MCF 10A (cell line): ENCODE measurements at regions of chr12 and their contacts with region 1.

Region 1: DNA sequence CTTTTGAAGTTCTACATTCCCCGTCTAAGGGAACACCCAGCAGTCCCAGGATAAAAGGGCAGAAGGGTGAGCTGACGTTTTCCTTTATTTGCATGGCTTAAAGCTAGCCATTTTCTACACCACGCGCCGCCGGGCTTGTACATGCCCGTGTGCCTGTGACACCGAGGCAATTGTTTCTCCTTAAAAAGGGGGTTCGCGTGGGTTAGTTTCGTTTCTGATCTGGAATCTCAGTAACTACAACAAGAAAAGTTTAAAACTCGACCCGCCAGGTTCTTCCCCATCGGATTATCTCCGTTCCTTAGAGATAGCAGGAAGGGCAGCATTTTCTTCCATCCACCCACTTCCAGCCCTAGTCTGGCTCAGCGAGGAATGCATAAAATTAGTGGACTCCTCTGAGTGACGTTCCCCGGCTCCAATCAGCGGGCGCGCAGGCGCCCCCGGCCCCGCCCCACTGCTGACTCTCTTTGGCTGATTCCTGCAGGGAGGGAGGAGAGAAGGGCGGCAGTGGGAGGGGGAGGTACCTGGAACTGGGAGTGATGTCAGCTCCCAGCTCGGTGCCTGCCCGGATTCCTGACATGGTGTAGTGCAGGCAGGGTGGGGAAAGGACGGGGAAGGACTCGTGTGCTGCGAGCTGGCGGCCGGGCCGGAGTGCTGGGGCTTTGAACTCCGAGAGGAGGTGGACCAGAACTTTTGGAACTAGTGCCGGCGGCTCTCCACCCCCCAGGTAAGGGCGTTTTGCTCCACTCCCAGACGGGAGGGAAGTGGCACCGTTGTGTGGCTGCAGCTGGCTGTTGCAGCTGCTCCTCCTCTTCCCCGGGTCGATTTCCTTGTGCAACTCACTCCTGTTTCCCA is at the start of gene PPFIBP1:
- DNase-seq: peak; percentile 99
- H3K4me3 Mint-ChIP-seq: peak within 1 kb of the TSS; percentile 85
- H3K27ac Mint-ChIP-seq: peak within 1 kb of the TSS; percentile 90
- H3K4me1 Mint-ChIP-seq: peaks cover 23% of the 10 kb centered on the region
- H3K27me3 Mint-ChIP-seq: no peaks in the 10 kb centered on the region
- CTCF ChIP-seq: no peak
- total RNA-seq, gene PPFIBP1: 82.6 and 87.7 TPM in 2 replicates

Region 2: DNA sequence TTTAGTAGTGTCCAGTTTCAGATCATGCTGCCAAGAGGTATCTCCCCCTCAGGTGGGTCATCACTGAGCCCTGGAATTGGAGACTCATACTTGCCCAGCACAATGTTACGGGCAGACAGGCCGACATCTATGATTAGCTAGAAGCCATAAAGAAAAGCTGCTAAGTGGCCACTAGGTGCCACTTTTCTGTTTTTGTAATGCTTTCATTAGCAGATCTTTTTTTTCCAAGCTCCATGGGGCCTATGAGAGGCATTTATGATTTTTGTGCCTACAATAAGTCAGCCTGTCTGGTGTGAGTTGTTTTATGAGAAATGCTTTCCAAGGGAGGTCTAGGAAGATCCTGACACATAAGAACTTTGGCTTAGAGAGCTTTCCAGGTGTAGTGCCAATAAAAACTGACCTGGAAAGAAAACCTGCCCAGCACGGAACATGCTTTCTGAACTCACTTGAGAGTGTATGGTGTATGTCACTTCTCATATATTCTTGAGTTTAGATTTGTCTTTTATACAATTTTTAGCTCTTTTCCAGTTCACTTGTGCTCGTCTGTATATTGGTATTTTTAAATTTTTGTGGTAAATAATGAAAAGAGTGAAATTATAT is 99.1 kb before region 1 on chr12:
- CTCF ChIA-PET with region 1: interaction called, 3 read pairs
- POLR2A ChIA-PET with region 1: interaction called, 10 read pairs
- intact Hi-C with region 1: no loop called
- DNase-seq: peak; percentile 54
- H3K4me3 Mint-ChIP-seq: no peak overlapping the region
- H3K27ac Mint-ChIP-seq: no peak overlapping the region
- H3K4me1 Mint-ChIP-seq: no peaks in the 10 kb centered on the region
- H3K27me3 Mint-ChIP-seq: no peaks in the 10 kb centered on the region
- CTCF ChIP-seq: peak; percentile 45

Region 3: DNA sequence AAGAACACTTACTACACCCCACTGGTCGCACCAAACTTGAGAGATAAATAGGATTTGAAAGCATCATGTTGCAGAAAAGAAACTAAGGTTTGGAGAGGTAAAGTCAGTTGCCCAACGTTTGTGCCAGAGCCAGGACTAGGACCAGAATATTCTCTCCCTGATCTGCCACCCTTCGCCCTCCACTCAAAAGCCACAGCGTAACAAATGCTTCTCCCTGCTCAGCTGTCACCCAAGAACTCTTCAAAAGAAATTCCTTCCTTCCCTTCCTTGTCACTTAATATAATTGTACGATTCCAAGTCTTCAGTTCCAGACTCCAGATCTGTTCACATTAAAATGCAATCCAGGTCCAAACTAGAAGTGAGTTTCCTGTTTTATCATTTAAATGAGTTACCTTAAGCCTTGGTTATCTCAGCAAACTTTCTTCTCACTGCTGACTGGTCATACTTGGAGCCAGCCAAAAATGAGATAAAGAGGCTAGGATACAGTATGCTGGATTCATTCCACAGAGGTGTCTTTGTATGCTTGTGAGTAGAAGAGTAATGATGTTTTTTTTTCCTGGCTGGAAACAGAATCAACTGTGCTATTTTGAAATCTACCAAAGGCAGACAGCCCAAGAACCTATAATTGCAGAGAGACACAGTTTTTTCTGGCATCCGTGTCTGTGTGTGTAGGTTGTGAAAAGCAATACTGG is 12.7 kb before region 1 on chr12:
- CTCF ChIA-PET with region 1: no interaction called
- POLR2A ChIA-PET with region 1: interaction called, 17 read pairs
- intact Hi-C with region 1: no loop called
- DNase-seq: no peak
- H3K4me3 Mint-ChIP-seq: no peak overlapping the region
- H3K27ac Mint-ChIP-seq: no peak overlapping the region
- H3K4me1 Mint-ChIP-seq: no peaks in the 10 kb centered on the region
- H3K27me3 Mint-ChIP-seq: no peaks in the 10 kb centered on the region
- CTCF ChIP-seq: no peak

Region 4: DNA sequence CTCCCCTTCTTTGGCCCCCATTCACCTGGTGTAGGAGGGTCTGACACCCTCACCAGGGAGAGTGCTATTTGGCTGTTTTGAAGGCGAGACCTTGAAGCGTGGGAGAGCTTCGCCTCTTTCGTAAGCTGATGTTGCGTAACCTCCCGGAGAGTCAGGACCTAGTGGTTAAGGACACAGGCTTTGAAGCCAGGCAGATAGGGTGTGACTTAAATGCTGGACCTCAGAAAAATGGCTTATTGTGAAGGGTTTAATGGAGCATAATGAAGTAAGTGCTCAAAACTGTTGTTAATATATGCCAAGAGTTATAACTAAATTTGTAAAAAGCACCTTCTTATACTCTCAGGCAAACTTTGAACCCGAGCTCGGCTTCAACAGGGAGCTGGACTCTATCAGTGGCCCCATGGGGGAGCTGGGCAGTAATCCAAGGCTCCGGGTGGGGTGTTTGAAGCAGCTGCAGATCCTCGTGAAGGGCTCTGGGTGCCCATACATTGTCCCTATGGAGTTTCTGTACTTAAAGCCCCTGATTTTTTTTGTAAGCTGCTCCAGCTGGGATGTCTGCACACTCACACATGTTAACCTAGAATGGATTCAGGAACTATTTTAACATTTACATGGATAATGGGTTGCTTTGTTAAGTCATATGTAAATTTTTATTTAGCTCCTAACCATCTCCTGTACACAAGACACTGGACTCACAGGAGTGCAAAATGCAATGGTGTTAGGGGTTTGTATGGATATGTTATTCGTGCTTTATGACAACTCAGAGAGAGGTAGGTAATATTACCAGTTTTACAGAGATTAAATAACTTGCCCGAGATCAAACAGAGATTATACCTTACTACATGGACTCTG is 26.2 kb after region 1 on chr12:
- CTCF ChIA-PET with region 1: interaction called, 3 read pairs
- POLR2A ChIA-PET with region 1: interaction called, 129 read pairs
- intact Hi-C with region 1: loop called (anchors 1 kb)
- DNase-seq: peak; percentile 98
- H3K4me3 Mint-ChIP-seq: peak overlapping the region; percentile 53
- H3K27ac Mint-ChIP-seq: peak overlapping the region; percentile 78
- H3K4me1 Mint-ChIP-seq: peaks cover 37% of the 10 kb centered on the region
- H3K27me3 Mint-ChIP-seq: no peaks in the 10 kb centered on the region
- CTCF ChIP-seq: no peak

Region 5: DNA sequence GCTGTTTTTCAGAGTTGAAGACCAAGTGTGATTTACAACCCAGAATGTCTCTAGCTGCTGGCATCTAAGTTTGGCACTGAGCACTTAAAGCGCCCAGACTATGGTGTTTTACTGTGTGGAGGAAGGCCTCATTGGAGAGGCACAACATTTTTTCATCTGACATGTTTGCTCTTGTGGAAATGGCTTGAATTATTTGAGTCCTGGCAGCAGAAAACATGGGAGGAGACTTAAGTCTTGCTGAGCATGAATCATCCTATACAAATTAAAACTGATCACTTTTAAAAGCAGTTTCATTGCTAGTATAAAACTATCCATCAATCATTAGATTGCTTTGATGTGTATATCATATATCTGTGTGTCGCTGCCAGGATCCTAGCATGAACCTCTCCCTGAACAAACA is 86.5 kb after region 1 on chr12:
- CTCF ChIA-PET with region 1: interaction called, 4 read pairs
- POLR2A ChIA-PET with region 1: interaction called, 13 read pairs
- intact Hi-C with region 1: no loop called
- DNase-seq: peak; percentile 78
- H3K4me3 Mint-ChIP-seq: no peak overlapping the region
- H3K27ac Mint-ChIP-seq: peak overlapping the region; percentile 89
- H3K4me1 Mint-ChIP-seq: peaks cover 27% of the 10 kb centered on the region
- H3K27me3 Mint-ChIP-seq: no peaks in the 10 kb centered on the region
- CTCF ChIP-seq: no peak